Ascending aorta (tissue), 2 donors: ENCODE measurements at regions of chr20 and their contacts with region 1.

Region 1: GRCh38 chr20:17504898-17505635 is 26.1 kb downstream of the BFSP1 start:
- DNase-seq: no peak
- H3K4me3 ChIP-seq: peak overlapping the region; percentile 60 to 65
- H3K27ac ChIP-seq: no peak overlapping the region
- H3K4me1 ChIP-seq: peaks cover 0 to 6% of the 10 kb centered on the region in 2 donors
- H3K27me3 ChIP-seq: no peaks in the 10 kb centered on the region
- CTCF ChIP-seq: peak; percentile 30 to 76 (median 74)

Region 2: GRCh38 chr20:17421493-17421892 is 83.6 kb before region 1 on chr20:
- intact Hi-C with region 1: no loop called
- DNase-seq: no peak
- H3K4me3 ChIP-seq: no peak overlapping the region
- H3K27ac ChIP-seq: no peak overlapping the region
- H3K4me1 ChIP-seq: no peaks in the 10 kb centered on the region
- H3K27me3 ChIP-seq: no peaks in the 10 kb centered on the region
- CTCF ChIP-seq: no peak

Region 3: GRCh38 chr20:17617551-17618223 is 112.6 kb after region 1 on chr20:
- intact Hi-C with region 1: loop called (anchors 1 kb)
- DNase-seq: peak in 1 of 2 donors; percentile 84
- H3K4me3 ChIP-seq: no peak overlapping the region
- H3K27ac ChIP-seq: peak overlapping the region; percentile 18 to 25
- H3K4me1 ChIP-seq: peaks cover 12 to 35% of the 10 kb centered on the region in 2 donors
- H3K27me3 ChIP-seq: no peaks in the 10 kb centered on the region
- CTCF ChIP-seq: peak; percentile 78 to 90 (median 80)

Region 4: GRCh38 chr20:17938871-17939619 is 434.0 kb after region 1 on chr20:
- intact Hi-C with region 1: loop called (anchors 2 kb)
- DNase-seq: peak; percentile 18 to 79
- H3K4me3 ChIP-seq: no peak overlapping the region
- H3K27ac ChIP-seq: peak overlapping the region; percentile 33 to 73
- H3K4me1 ChIP-seq: peaks cover 10 to 30% of the 10 kb centered on the region in 2 donors
- H3K27me3 ChIP-seq: no peaks in the 10 kb centered on the region
- CTCF ChIP-seq: peak; percentile 85 to 92 (median 90)

Region 5: GRCh38 chr20:17995967-17996819 is 491.1 kb after region 1 on chr20:
- intact Hi-C with region 1: loop called (anchors 2 kb)
- DNase-seq: no peak
- H3K4me3 ChIP-seq: peak overlapping the region in 1 of 2 donors; percentile 4
- H3K27ac ChIP-seq: no peak overlapping the region
- H3K4me1 ChIP-seq: no peaks in the 10 kb centered on the region
- H3K27me3 ChIP-seq: no peaks in the 10 kb centered on the region
- CTCF ChIP-seq: peak; percentile 91 to 99 (median 92)